H1 (cell line): ENCODE measurements at regions of chr1 and their contacts with region 1.

Region 1: GRCh38 chr1:62906428-62906886 is 122.5 kb downstream of the ATG4C start:
- DNase-seq: peak in 1 of 2 experiments; percentile 54
- H3K4me3 ChIP-seq: no peak overlapping the region
- H3K27ac ChIP-seq: no peak overlapping the region
- H3K4me1 ChIP-seq: no peaks in the 10 kb centered on the region; a peak in 1 of 7 replicates
- H3K27me3 ChIP-seq: no peaks in the 10 kb centered on the region
- CTCF ChIP-seq: peak; percentile 54 to 67 (median 65)
- EP300 ChIP-seq: no peak
- POLR2A ChIP-seq: no peak
- RAD21 ChIP-seq: peak; percentile 16 to 35; a peak in 2 of 4 replicates

Region 2: DNA sequence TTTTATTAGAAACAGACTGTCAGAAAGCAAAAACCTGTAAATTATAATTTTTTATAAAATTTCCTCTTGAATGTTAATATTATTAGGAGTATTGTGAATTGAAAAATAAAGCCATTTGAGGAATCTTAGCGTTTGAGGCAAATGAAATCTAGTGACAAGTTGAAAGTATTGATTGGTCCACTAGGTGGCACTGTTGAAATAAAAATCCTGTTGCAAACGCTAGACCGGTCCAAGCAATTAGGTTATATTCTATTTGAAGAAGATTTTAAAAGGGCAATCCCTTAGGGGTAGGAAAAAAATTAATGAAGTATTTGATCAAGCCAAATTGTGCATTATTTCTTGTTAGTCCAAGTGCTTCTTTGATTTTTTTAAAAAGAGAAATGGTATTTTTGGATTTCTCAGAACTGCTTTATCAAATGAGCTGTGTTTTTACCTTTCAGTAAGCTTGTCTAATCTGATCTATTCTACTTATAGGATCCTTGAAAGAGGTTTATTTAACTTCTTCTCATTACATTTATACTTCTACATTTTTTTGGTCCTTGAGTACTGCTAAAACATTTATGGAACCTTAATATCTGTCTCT is 64.8 kb before region 1 on chr1:
- CTCF ChIA-PET with region 1: interaction called, 30 read pairs
- POLR2A ChIA-PET with region 1: no interaction called
- DNase-seq: no peak
- H3K4me3 ChIP-seq: no peak overlapping the region
- H3K27ac ChIP-seq: no peak overlapping the region
- H3K4me1 ChIP-seq: no peaks in the 10 kb centered on the region; a peak in 1 of 7 replicates
- H3K27me3 ChIP-seq: no peaks in the 10 kb centered on the region
- CTCF ChIP-seq: peak in 2 of 3 experiments; percentile 49 to 59; a peak in 2 of 4 replicates
- EP300 ChIP-seq: no peak
- POLR2A ChIP-seq: no peak
- RAD21 ChIP-seq: peak; percentile 75 to 79

Region 3: GRCh38 chr1:62882201-62883104 is 24.0 kb before region 1 on chr1:
- CTCF ChIA-PET with region 1: interaction called, 35 read pairs
- POLR2A ChIA-PET with region 1: no interaction called
- DNase-seq: no peak
- H3K4me3 ChIP-seq: no peak overlapping the region
- H3K27ac ChIP-seq: no peak overlapping the region
- H3K4me1 ChIP-seq: peaks cover 0 to 7% (median 4%) of the 10 kb centered on the region in 4 experiments; a peak in 3 of 7 replicates
- H3K27me3 ChIP-seq: no peaks in the 10 kb centered on the region
- CTCF ChIP-seq: no peak
- EP300 ChIP-seq: no peak
- POLR2A ChIP-seq: no peak
- RAD21 ChIP-seq: no peak

Region 4: DNA sequence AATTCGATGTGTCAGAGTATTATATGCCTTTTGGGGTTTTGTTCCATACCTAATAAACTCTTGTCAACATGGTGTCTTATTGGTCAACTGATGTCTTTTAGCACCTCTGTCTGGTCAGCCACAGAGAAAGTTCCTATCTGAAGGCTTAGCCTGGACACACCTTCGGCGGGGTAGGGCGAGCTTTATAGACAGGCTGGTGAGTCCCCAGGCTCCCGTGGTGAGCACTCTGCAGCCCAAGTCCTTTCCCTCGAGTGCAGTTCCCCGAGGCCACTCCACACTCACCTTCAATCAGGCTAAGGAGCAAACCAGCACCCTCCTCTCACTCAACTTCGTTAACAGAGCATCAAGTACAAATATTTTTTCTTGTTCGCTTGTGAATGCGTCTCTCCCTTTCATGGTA is 11.3 kb after region 1 on chr1:
- CTCF ChIA-PET with region 1: interaction called, 47 read pairs
- POLR2A ChIA-PET with region 1: interaction called, 3 read pairs
- DNase-seq: no peak
- H3K4me3 ChIP-seq: no peak overlapping the region
- H3K27ac ChIP-seq: no peak overlapping the region
- H3K4me1 ChIP-seq: peaks cover 1 to 5% (median 3%) of the 10 kb centered on the region in 4 experiments; a peak in 5 of 7 replicates
- H3K27me3 ChIP-seq: no peaks in the 10 kb centered on the region
- CTCF ChIP-seq: no peak
- EP300 ChIP-seq: no peak
- POLR2A ChIP-seq: no peak
- RAD21 ChIP-seq: no peak

Region 5: DNA sequence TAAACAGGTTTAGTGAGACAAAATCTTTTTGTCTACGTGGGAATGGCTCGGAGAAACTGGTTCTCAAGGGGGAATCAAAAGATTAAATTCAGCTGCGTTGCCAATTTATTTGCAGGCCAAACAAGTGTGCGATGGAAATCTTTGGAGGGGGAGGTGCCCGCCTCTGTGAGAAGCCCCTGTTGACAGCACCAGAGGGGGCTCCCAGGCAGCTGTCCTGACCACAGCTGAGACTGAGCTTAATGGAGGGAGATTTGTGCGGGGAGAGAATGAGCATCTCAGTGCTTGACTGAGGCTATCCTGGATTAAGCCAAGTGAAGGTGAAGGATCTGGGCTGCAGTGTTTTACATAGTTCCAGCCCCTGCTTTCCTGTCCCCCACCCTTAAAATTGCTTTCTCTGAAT is 47.2 kb after region 1 on chr1:
- CTCF ChIA-PET with region 1: interaction called, 13 read pairs
- POLR2A ChIA-PET with region 1: no interaction called
- DNase-seq: no peak
- H3K4me3 ChIP-seq: peak overlapping the region in 1 of 4 experiments; percentile 3; a peak in 1 of 8 replicates
- H3K27ac ChIP-seq: no peak overlapping the region
- H3K4me1 ChIP-seq: peaks cover 3 to 10% (median 5%) of the 10 kb centered on the region in 4 experiments; a peak in 6 of 7 replicates
- H3K27me3 ChIP-seq: no peaks in the 10 kb centered on the region
- CTCF ChIP-seq: no peak
- EP300 ChIP-seq: no peak
- POLR2A ChIP-seq: no peak
- RAD21 ChIP-seq: no peak

Region 6: GRCh38 chr1:62998845-62999649 is 92.6 kb after region 1 on chr1:
- CTCF ChIA-PET with region 1: interaction called, 11 read pairs
- POLR2A ChIA-PET with region 1: no interaction called
- DNase-seq: no peak
- H3K4me3 ChIP-seq: no peak overlapping the region
- H3K27ac ChIP-seq: no peak overlapping the region
- H3K4me1 ChIP-seq: peaks cover 0 to 6% (median 4%) of the 10 kb centered on the region in 4 experiments; a peak in 4 of 7 replicates
- H3K27me3 ChIP-seq: no peaks in the 10 kb centered on the region
- CTCF ChIP-seq: no peak
- EP300 ChIP-seq: no peak
- POLR2A ChIP-seq: no peak
- RAD21 ChIP-seq: no peak